ENCODE measurements at regions of chr3 and their contacts with region 1.

Region 1: DNA sequence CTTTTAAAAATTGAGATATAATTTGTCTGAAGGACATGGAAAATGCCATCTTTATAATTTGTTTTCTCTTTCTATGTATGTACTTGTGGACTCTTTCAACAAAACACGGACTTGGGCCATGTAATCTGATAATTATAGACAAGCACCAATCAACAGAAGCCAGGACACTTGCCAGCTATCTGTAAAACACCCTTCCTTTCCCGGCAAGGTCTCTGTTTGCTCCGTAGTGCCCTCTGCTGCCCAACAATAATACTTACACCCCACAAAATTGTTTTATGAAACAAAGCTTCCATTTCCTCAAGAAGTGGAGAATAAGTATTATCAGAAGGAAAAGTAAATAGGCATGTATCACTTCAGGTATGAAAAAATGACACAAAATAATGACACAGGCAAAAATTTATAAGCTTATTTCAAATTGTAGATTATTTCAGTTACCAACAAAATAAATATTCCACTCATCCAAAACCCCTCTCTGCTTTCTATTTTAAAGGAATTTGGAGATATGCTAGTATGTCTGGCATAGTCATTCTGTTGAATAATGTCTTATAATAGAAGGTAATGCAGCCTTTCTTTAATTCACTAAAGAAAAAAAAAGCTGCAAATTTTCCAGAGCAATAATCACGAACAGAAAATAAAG is 32.8 kb downstream of the MYH15 start:
- DNase-seq: peak; percentile 17 to 65 (median 51)
- ATAC-seq: peak; percentile 91
- H3K4me3 ChIP-seq: no peak overlapping the region
- H3K4me3 Mint-ChIP-seq: no peak overlapping the region
- H3K27ac ChIP-seq: no peak overlapping the region
- H3K27ac Mint-ChIP-seq: no peak overlapping the region
- H3K4me1 ChIP-seq: no peaks in the 10 kb centered on the region
- H3K4me1 Mint-ChIP-seq: peaks cover 0 to 7% (median 0%) of the 10 kb centered on the region in 7 donors
- H3K27me3 ChIP-seq: no peaks in the 10 kb centered on the region
- H3K27me3 Mint-ChIP-seq: peaks cover 0 to 17% (median 3%) of the 10 kb centered on the region in 5 donors

Region 2: DNA sequence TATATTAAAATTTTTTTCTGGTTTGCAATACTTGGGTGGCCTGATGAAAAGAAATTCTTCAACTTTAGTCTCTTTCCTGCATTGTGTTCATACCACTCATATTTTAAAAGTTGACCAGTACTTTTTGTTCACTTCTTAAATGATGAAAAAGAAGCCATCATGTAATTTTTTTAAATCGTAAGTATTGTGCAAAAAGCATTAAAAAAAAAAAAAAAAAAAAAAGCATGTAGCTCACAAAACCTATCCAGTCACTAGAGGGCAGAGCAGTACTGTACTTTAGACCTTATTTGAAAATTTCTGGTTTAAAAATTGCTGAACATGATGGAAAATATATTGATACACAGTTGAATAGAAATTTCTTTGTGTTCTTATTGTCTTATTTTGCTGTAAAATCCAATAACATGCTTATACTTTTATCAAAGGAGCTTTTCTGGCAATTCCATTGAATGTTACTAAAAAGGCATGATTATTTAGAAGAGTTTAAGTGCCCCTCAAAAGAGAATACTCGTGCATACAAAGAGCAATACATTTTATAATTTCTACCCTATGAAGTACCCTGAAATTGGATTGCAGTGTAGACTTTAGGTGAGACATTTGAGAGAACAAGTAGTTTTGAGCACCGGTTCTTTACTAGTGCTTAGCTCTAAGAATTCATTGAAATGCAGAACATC is 817.2 kb before region 1 on chr3:
- CTCF ChIA-PET with region 1: interaction called, 4 read pairs
- POLR2A ChIA-PET with region 1: no interaction called
- intact Hi-C with region 1: loop called in 1 of 2 experiments (anchors 1 kb)
- DNase-seq: peak in 6 of 9 donors; percentile 11 to 43 (median 34)
- ATAC-seq: peak; percentile 67
- H3K4me3 ChIP-seq: no peak overlapping the region
- H3K4me3 Mint-ChIP-seq: no peak overlapping the region
- H3K27ac ChIP-seq: no peak overlapping the region
- H3K27ac Mint-ChIP-seq: no peak overlapping the region
- H3K4me1 ChIP-seq: peaks cover 0 to 13% of the 10 kb centered on the region in 2 donors
- H3K4me1 Mint-ChIP-seq: peaks cover 15 to 45% (median 31%) of the 10 kb centered on the region in 7 donors
- H3K27me3 ChIP-seq: no peaks in the 10 kb centered on the region
- H3K27me3 Mint-ChIP-seq: no peaks in the 10 kb centered on the region

Region 3: DNA sequence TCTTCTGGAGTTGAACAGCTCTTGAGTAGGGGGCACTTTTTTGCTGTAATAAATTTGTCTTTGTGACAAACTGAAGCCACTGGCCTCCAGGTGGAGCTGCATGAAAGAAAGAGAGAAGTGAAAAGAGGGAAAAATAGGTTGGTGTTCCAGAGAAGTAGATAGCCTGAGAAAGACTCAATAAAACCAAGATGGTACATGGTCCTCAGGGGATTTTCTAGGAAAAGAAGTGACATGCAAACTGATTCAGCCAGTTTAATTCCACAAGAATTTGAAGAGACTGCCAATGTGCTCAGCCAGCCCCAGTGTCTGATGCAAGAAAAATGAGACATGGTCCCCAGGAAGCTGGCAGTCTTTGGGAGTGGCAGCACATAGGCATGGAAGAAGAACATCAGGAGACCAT is 539.5 kb before region 1 on chr3:
- CTCF ChIA-PET with region 1: interaction called, 6 read pairs
- POLR2A ChIA-PET with region 1: no interaction called
- intact Hi-C with region 1: loop called in 1 of 2 experiments (anchors 1 kb)
- DNase-seq: peak in 4 of 9 donors; percentile 6 to 19 (median 8)
- ATAC-seq: no peak
- H3K4me3 ChIP-seq: no peak overlapping the region
- H3K4me3 Mint-ChIP-seq: no peak overlapping the region
- H3K27ac ChIP-seq: no peak overlapping the region
- H3K27ac Mint-ChIP-seq: no peak overlapping the region
- H3K4me1 ChIP-seq: peaks cover 0 to 4% of the 10 kb centered on the region in 2 donors
- H3K4me1 Mint-ChIP-seq: peaks cover 0 to 15% (median 8%) of the 10 kb centered on the region in 7 donors
- H3K27me3 ChIP-seq: no peaks in the 10 kb centered on the region
- H3K27me3 Mint-ChIP-seq: peaks cover 0 to 30% (median 0%) of the 10 kb centered on the region in 5 donors

Region 4: DNA sequence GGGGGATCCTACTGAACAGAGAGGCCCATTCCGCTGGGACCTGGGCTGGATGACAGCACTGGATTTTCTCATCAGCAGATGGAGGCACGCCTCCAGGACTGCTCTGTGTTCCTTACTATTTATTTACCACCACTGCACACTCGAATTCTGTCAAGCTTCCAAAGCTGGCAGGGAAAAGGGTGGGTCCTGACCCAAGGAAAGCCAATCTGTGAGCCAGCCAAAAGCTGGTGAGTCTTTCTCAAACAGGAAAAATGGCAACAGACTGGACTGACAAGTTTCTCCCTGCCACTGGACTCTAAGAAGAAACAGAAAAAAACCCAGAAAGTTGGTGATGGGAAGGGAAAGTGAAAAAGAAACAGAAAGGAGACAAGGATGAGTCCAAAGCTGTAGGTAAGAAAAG is 424.6 kb before region 1 on chr3:
- CTCF ChIA-PET with region 1: no interaction called
- POLR2A ChIA-PET with region 1: no interaction called
- intact Hi-C with region 1: loop called in 1 of 2 experiments (anchors 5 kb)
- DNase-seq: no peak
- ATAC-seq: no peak
- H3K4me3 ChIP-seq: no peak overlapping the region
- H3K4me3 Mint-ChIP-seq: no peak overlapping the region
- H3K27ac ChIP-seq: no peak overlapping the region
- H3K27ac Mint-ChIP-seq: peak overlapping the region in 7 of 9 donors; percentile 10 to 82 (median 77)
- H3K4me1 ChIP-seq: peaks cover 4 to 8% of the 10 kb centered on the region in 2 donors
- H3K4me1 Mint-ChIP-seq: peaks cover 31 to 68% (median 49%) of the 10 kb centered on the region in 7 donors
- H3K27me3 ChIP-seq: no peaks in the 10 kb centered on the region
- H3K27me3 Mint-ChIP-seq: no peaks in the 10 kb centered on the region

Region 5: DNA sequence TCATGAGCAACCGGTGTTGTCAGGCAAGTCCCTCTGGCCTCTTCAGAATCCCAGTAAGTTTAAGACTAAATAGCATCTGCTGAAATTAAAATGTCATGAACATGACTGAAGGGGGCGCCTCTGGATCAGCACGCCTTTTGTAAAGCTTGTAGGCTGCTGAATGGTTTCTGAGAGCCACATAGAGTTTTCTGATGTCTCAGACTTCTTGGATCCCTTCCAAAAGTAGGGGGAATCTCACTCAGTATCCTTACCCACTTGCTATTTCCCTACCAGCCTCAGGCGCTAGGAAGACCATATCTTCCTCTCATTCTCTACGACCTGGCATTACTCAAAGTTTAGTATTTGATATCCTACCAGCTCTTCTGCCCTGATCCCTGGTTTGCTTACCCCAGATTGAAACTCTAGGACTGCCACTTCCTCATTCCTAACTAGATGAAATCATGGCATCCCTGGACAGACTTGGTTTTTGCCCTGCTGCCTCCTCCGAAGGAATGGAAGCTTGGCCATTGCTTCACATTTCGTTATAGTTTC is 324.1 kb before region 1 on chr3:
- CTCF ChIA-PET with region 1: interaction called, 10 read pairs
- POLR2A ChIA-PET with region 1: no interaction called
- intact Hi-C with region 1: loop called in 1 of 2 experiments (anchors 1 kb)
- DNase-seq: peak in 8 of 9 donors; percentile 36 to 64 (median 45)
- ATAC-seq: peak; percentile 73
- H3K4me3 ChIP-seq: no peak overlapping the region
- H3K4me3 Mint-ChIP-seq: no peak overlapping the region
- H3K27ac ChIP-seq: no peak overlapping the region
- H3K27ac Mint-ChIP-seq: peak overlapping the region in 1 of 9 donors; percentile 25
- H3K4me1 ChIP-seq: peaks cover 0 to 4% of the 10 kb centered on the region in 2 donors
- H3K4me1 Mint-ChIP-seq: peaks cover 0 to 21% (median 13%) of the 10 kb centered on the region in 7 donors
- H3K27me3 ChIP-seq: no peaks in the 10 kb centered on the region
- H3K27me3 Mint-ChIP-seq: no peaks in the 10 kb centered on the region

Region 6: DNA sequence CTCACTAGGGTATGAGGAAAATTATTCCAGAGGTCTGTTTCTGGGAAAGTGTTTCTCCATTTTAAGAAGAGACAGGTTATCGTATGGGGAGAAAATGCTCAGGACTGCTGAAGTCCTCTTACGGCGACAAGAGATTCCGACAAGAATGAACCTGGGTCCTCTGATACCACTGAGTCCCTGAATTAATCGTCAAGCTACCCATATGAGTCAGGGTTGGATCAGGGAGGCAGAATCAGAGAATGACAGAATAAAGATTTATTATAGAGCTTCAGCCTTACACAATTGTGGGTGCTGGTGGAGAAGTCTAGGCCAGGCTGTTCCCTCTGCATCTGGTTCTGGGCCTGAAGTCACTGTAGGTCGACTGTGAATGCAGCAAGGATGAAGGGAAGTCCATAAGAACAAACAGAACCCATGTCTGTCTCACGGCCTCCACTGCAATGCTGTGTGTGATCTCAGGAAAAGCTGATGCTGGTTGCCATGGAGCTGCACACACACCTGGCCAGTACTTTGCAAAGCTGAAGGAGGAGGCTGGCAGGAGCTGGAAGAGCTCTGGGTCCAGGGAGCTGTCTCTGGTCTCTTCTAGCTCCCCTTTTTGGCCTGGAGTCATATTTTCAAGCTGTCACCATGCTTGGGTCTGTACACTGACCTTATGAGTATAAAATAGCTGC is 97.4 kb before region 1 on chr3:
- CTCF ChIA-PET with region 1: no interaction called
- POLR2A ChIA-PET with region 1: no interaction called
- intact Hi-C with region 1: no loop called
- DNase-seq: no peak
- ATAC-seq: no peak
- H3K4me3 ChIP-seq: no peak overlapping the region
- H3K4me3 Mint-ChIP-seq: no peak overlapping the region
- H3K27ac ChIP-seq: no peak overlapping the region
- H3K27ac Mint-ChIP-seq: no peak overlapping the region
- H3K4me1 ChIP-seq: no peaks in the 10 kb centered on the region
- H3K4me1 Mint-ChIP-seq: no peaks in the 10 kb centered on the region
- H3K27me3 ChIP-seq: no peaks in the 10 kb centered on the region
- H3K27me3 Mint-ChIP-seq: peaks cover 0 to 2% (median 0%) of the 10 kb centered on the region in 5 donors